ENCODE measurements at regions of chr1 and their contacts with region 1.

Region 1: DNA sequence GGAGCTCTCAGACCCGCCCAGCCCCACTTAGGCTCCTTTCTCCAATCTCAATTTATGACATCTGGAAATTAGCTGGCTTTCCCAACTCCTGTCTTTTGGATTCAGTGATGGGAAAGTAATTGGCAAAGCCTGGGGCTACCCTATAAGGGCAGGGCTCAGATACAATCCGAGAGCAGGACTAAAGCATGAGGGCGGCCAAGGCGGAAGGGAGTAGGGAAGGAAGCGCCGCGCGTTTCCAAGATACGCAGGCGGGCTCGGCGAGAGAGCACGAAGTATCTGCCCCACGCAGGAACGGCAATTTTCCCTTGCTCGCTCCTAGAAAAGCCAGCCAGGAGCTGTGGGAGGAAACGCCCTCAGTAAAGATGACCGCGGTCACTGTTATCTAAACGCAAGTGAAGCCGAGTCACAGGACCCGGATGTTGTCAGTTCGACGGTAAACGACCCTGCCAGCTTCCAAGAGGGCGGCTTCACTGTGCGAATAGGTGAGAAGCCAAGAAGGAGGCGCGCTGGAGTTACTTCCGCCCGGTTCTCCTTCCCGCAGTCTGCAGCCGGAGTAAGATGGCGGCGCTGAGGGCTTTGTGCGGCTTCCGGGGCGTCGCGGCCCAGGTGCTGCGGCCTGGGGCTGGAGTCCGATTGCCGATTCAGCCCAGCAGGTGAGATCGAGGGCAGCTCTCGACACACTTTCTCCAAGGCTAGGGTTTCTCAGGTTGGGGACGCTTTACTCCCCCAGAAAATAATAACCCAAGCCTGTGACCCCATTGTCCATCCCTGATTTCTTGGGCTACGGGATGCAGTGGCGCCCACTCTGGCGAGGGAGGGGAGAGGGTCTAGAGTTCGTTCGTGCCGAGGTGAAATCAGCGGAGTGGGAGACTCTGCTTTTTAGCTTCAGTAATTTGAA is at the start of gene NDUFS2:
- DNase-seq: peak; percentile 98

Region 2: GRCh38 chr1:161177112-161177935 is 24.8 kb before region 1 on chr1 and contains the start of gene B4GALT3:
- CTCF ChIA-PET with region 1: interaction called, 4 read pairs
- POLR2A ChIA-PET with region 1: interaction called, 12 read pairs
- DNase-seq: peak; percentile 99

Region 3: GRCh38 chr1:161216945-161217712 is 15.1 kb after region 1 on chr1:
- CTCF ChIA-PET with region 1: interaction called, 3 read pairs
- POLR2A ChIA-PET with region 1: interaction called, 32 read pairs
- DNase-seq: no peak